Activated T-helper 1 cell treated with anti-CD3 and anti-CD28 coated beads, Interleukin-12 subunit alpha, Interleukin-12 subunit beta, Interleukin-2, Interleukin-4 antibody, amounts not matched to agents 30 ng/mL and 10 ng/mL and 1 ng/mL, durations not matched to agents 14 hours and 24 hours and 36 hours (primary cell): ENCODE measurements at regions of chr14 and their contacts with region 1.

Region 1: GRCh38 chr14:35320472-35320871 is 28.3 kb downstream of the PSMA6 start:
- DNase-seq: no peak
- H3K4me3 Mint-ChIP-seq: no peak overlapping the region
- H3K27ac Mint-ChIP-seq: no peak overlapping the region
- H3K4me1 Mint-ChIP-seq: no peaks in the 10 kb centered on the region
- H3K27me3 Mint-ChIP-seq: no peaks in the 10 kb centered on the region

Region 2: GRCh38 chr14:33959692-33960151 is 1360.8 kb before region 1 on chr14:
- intact Hi-C with region 1: no loop called
- DNase-seq: no peak
- H3K4me3 Mint-ChIP-seq: no peak overlapping the region
- H3K27ac Mint-ChIP-seq: no peak overlapping the region
- H3K4me1 Mint-ChIP-seq: peaks cover 40% of the 10 kb centered on the region
- H3K27me3 Mint-ChIP-seq: peaks cover 20% of the 10 kb centered on the region

Region 3: DNA sequence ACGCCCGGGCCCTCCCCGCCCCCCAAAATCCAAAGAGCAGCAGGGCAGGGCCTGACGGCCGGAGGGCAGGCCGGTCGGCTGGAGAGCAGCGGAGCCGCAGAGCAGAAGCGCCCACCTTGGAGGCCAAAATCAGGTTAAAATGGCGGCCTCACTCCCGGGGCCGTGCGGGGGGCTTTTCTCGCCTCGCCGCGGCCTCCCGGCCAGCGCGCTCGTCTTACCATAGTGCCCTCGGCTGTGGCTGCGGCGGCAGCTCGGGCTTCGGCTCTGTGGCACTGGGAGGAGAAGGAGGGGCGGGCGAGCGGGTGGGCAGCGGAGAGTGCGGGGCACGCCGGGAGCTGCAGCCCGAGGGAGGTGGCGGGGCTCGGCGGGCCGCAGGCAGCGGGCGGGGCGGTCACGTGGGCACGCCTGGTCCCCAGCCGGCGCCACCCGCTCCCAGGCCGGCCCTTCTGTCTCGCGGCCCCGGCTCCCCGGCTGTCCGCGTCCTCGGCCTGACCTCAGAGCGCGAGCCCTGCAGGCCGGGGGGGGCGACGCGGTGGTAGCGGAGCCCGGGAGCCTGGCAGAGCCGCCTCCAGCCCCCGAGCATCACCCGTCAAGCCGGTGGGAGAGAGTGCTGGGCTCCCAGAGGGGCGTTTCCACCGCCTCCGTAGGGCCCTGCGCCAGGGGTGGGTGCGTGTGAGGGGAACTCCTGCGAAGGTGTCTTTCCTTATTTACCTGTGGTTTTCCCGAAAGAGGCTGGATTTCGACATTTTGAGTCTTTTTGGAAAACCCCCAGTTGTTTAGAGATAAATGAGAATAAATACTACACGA is 605.9 kb before region 1 on chr14 and contains the start of gene CFL2:
- intact Hi-C with region 1: loop called (anchors 10 kb)
- DNase-seq: peak; percentile 51
- H3K4me3 Mint-ChIP-seq: peak within 1 kb of the TSS; percentile 95
- H3K27ac Mint-ChIP-seq: peak within 1 kb of the TSS; percentile 95
- H3K4me1 Mint-ChIP-seq: peaks cover 33% of the 10 kb centered on the region
- H3K27me3 Mint-ChIP-seq: peaks cover 9% of the 10 kb centered on the region
- total RNA-seq, gene CFL2: 8.3 and 9.2 TPM in 2 replicates

Region 4: GRCh38 chr14:34797747-34798583 is 522.5 kb before region 1 on chr14:
- intact Hi-C with region 1: no loop called
- DNase-seq: no peak
- H3K4me3 Mint-ChIP-seq: no peak overlapping the region
- H3K27ac Mint-ChIP-seq: no peak overlapping the region
- H3K4me1 Mint-ChIP-seq: no peaks in the 10 kb centered on the region
- H3K27me3 Mint-ChIP-seq: no peaks in the 10 kb centered on the region

Region 5: GRCh38 chr14:35159742-35160409 is 160.6 kb before region 1 on chr14:
- intact Hi-C with region 1: loop called (anchors 5 kb)
- DNase-seq: no peak
- H3K4me3 Mint-ChIP-seq: peak overlapping the region; percentile 5
- H3K27ac Mint-ChIP-seq: peak overlapping the region; percentile 81
- H3K4me1 Mint-ChIP-seq: peaks cover 67% of the 10 kb centered on the region
- H3K27me3 Mint-ChIP-seq: no peaks in the 10 kb centered on the region

Region 6: GRCh38 chr14:35341446-35342159 is 21.1 kb after region 1 on chr14:
- intact Hi-C with region 1: no loop called
- DNase-seq: no peak
- H3K4me3 Mint-ChIP-seq: no peak overlapping the region
- H3K27ac Mint-ChIP-seq: peak overlapping the region; percentile 18
- H3K4me1 Mint-ChIP-seq: peaks cover 19% of the 10 kb centered on the region
- H3K27me3 Mint-ChIP-seq: no peaks in the 10 kb centered on the region

Region 7: DNA sequence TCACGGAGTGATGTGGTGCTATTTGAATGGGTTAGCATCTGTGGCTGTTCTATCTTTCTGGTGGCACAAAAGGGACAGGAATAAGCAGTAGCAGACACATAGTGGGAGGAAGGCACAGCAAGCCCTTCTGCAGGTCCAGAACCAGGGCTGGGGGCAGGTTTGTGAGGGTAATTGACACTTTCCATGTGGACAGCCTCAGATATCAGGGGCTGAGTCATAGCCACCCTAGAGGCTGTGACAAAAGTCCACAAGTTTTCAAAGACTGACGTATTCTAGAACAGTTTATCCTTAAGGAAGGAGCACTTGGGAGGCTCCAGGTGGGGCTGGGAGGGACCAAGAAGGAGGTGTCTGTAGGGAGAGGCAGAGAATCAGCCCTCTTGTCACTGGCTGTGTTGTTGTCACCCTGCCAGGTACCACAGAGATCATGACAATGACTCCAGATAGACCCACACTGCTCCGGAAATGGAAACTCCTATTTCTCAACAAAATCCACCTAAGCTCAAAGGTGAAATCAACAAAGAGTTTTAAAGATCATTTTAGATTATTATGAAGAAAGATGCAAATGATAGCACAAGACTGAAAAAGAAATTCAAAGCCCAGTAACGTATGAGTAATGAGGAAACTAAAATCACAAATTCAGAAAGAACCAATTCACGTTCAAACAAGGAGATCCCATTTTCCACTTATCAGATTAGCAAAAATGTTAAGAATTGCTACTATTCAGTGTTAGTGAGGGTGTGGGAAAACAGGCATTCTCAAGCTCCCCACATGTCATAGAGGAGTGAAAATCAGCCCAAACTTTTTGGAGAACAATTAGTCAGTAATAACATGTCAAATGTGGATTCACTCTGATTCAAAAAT is 35.7 kb after region 1 on chr14:
- intact Hi-C with region 1: loop called (anchors 1 kb)
- DNase-seq: no peak
- H3K4me3 Mint-ChIP-seq: no peak overlapping the region
- H3K27ac Mint-ChIP-seq: peak overlapping the region; percentile 33
- H3K4me1 Mint-ChIP-seq: peaks cover 16% of the 10 kb centered on the region
- H3K27me3 Mint-ChIP-seq: no peaks in the 10 kb centered on the region